CD8-positive, alpha-beta T cell (primary cell): ENCODE measurements at regions of chr6 and their contacts with region 1.

Region 1: GRCh38 chr6:117555882-117556498 is 46.3 kb downstream of the GOPC start:
- DNase-seq: peak in 8 of 9 experiments; percentile 26 to 78 (median 65)
- ATAC-seq: peak; percentile 55
- H3K4me3 ChIP-seq: no peak overlapping the region
- H3K4me3 Mint-ChIP-seq: no peak overlapping the region
- H3K27ac ChIP-seq: no peak overlapping the region
- H3K27ac Mint-ChIP-seq: no peak overlapping the region
- H3K4me1 ChIP-seq: peaks cover under 1% of the 10 kb centered on the region
- H3K4me1 Mint-ChIP-seq: peaks cover 8% of the 10 kb centered on the region
- H3K27me3 ChIP-seq: no peaks in the 10 kb centered on the region
- H3K27me3 Mint-ChIP-seq: no peaks in the 10 kb centered on the region
- CTCF ChIP-seq: peak; percentile 97

Region 2: DNA sequence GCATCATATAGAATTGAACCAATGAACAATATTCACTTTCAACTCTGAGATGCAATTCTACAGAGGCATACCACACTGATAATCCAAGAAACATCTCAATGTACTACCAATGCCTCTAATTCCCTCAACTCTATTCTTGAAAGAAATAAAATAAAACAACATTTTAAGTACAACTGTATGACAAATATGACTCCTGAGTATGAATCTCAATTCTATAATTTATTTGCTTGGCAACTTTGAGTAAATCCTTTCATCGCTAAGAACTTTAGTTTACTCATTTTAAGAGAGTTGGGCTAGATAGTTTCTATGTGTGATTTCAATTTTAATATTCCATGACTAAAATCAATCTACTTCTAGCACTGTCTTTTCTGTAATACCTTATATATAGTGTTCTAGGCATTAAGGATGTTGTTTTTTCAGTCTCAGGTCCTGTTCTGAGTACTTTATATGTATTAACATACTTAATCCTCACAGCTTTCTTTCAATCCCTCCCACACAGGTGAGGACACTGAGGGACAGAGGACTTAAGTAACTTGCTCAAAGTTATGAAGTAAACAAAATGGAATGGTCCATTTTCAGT is 12.9 kb after region 1 on chr6:
- CTCF ChIA-PET with region 1: interaction called, 6 read pairs
- POLR2A ChIA-PET with region 1: no interaction called
- intact Hi-C with region 1: loop called in 1 of 2 experiments (anchors 1 kb)
- DNase-seq: no peak
- ATAC-seq: no peak
- H3K4me3 ChIP-seq: no peak overlapping the region
- H3K4me3 Mint-ChIP-seq: no peak overlapping the region
- H3K27ac ChIP-seq: no peak overlapping the region
- H3K27ac Mint-ChIP-seq: no peak overlapping the region
- H3K4me1 ChIP-seq: no peaks in the 10 kb centered on the region
- H3K4me1 Mint-ChIP-seq: peaks cover 2% of the 10 kb centered on the region
- H3K27me3 ChIP-seq: no peaks in the 10 kb centered on the region
- H3K27me3 Mint-ChIP-seq: no peaks in the 10 kb centered on the region
- CTCF ChIP-seq: no peak